Transverse colon (tissue), 4 donors: ENCODE measurements at regions of chr5 and their contacts with region 1.

Region 1: DNA sequence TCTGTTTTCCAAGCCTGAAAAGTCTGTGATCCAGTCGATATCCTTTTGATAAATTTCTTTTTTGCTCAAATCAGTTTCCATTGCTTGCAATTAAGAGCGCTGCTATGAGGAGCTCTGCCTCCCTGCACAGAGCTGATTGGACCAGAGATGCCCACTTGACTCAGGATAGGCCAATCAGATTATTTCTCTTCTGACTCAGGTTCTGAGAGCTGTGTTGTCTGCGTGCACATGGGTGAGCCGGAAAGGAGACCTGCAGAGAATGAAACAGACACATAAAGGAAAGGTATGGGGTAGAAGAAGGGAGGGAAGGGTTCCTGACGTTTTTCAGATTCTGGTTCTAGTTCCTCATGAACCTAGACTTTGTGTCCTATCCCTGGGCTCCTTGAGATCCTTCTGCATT is 15.8 kb upstream of the FABP6 start:
- DNase-seq: no peak
- H3K4me3 ChIP-seq: no peak overlapping the region
- H3K27ac ChIP-seq: no peak overlapping the region
- H3K4me1 ChIP-seq: no peaks in the 10 kb centered on the region
- H3K27me3 ChIP-seq: no peaks in the 10 kb centered on the region
- CTCF ChIP-seq: no peak
- EP300 ChIP-seq: no peak
- POLR2A ChIP-seq: no peak

Region 2: DNA sequence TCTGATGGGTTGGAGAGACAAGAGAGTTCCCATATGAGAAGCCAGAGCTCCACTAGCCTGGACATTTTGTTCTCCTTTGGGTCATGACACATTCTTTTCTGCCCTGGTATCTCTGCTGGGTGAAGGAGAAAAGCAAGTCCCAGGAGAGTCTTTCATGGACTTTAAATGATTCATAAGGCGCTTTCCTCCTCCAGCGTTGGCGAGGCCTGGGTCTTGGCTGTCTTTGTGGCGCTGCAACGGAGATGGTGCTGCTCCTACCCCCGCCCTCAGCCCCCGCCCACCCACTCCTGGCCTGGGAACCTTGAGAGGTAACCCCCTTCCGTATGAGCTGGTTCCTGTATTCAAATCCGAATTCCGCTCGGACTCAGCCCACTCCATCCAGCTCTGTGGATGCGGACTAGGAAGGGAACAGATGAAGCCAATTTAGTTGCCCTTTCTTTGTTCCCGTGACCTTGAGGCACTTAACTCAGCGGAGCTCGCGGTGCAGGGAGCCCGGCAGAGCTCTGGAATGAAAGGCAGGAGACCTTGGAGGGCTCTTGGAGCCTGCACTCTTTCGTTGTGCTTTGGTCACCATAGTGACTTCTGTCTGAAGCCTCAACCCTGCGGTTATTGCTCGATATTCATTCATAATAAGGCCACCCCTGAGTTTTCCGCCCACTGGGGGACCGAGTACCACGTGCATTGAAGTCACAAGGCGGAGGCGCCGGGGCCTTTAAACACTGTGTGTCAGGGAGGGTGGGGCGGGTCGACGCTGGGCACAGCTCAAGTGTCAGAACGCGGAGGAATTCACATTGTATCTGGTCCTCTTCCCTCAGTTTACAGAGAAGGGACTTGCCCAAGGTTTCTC is 80.2 kb before region 1 on chr5:
- in situ Hi-C with region 1: no loop called
- intact Hi-C with region 1: no loop called
- DNase-seq: no peak
- H3K4me3 ChIP-seq: peak overlapping the region in 1 of 4 donors; percentile 18
- H3K27ac ChIP-seq: no peak overlapping the region
- H3K4me1 ChIP-seq: peaks cover 0 to 6% (median 0%) of the 10 kb centered on the region in 4 donors
- H3K27me3 ChIP-seq: no peaks in the 10 kb centered on the region
- CTCF ChIP-seq: no peak
- EP300 ChIP-seq: no peak
- POLR2A ChIP-seq: no peak

Region 3: GRCh38 chr5:160887777-160888176 is 674.2 kb after region 1 on chr5:
- in situ Hi-C with region 1: no loop called
- intact Hi-C with region 1: loop called (anchors 5 kb)
- DNase-seq: peak; percentile 16
- H3K4me3 ChIP-seq: no peak overlapping the region
- H3K27ac ChIP-seq: peak overlapping the region in 2 of 4 donors; percentile 17 to 33
- H3K4me1 ChIP-seq: peaks cover 0 to 4% (median 0%) of the 10 kb centered on the region in 4 donors
- H3K27me3 ChIP-seq: no peaks in the 10 kb centered on the region
- CTCF ChIP-seq: no peak
- EP300 ChIP-seq: no peak
- POLR2A ChIP-seq: no peak

Region 4: GRCh38 chr5:161572914-161573313 is 1359.4 kb after region 1 on chr5:
- in situ Hi-C with region 1: no loop called
- intact Hi-C with region 1: no loop called
- DNase-seq: no peak
- H3K4me3 ChIP-seq: no peak overlapping the region
- H3K27ac ChIP-seq: no peak overlapping the region
- H3K4me1 ChIP-seq: no peaks in the 10 kb centered on the region
- H3K27me3 ChIP-seq: no peaks in the 10 kb centered on the region
- CTCF ChIP-seq: no peak
- EP300 ChIP-seq: no peak
- POLR2A ChIP-seq: no peak